Thyroid gland (tissue), 4 donors: ENCODE measurements at regions of chr1 and their contacts with region 1.

Region 1: DNA sequence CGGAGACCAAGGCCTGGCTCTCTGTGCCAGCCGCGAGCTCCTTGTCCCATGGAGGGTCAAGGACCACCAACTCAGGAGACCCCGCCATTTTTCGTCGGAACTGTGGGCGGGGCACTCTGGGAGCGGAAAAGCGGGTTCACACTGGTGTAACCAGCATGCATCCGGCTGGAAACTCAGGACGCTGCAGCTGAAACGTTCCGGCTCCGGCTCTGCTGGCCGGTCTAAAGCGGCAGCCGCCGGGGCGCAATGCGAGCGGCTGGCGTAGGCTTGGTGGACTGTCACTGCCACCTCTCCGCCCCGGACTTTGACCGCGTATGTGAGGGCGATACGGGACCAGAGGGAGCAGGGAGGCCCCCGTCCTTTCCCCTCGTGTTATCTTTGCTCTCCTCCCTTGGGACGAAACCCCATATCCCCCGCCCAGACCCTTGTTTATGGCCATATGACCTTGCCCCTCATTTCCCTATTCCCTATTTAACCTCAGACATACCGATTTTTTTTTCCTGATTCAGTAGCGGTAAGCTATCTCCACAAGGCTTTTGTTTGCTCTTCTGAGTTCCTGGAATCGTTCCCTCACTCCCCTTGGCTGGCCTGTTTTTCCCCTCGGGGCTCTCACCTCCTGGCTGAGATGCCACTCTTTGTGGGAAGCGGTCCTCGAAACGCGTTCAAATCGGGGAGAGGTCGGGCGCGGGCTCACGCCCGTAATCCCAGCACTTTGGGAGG is at the starts of genes NSL1 and TATDN3:
- DNase-seq: peak; percentile 83 to 85
- H3K4me3 ChIP-seq: peak within 1 kb of the TSS; percentile 67 to 81 (median 78)
- H3K27ac ChIP-seq: peak within 1 kb of the TSS; percentile 84 to 93 (median 86)
- H3K4me1 ChIP-seq: peaks cover 15 to 20% of the 10 kb centered on the region in 2 donors
- H3K27me3 ChIP-seq: no peaks in the 10 kb centered on the region
- CTCF ChIP-seq: no peak
- POLR2A ChIP-seq: peak in 1 of 2 donors; percentile 79
- total RNA-seq, gene NSL1: 47.5 to 62.8 (median 62.2) TPM
- total RNA-seq, gene TATDN3: 12.1 to 20.2 (median 18.6) TPM

Region 2: DNA sequence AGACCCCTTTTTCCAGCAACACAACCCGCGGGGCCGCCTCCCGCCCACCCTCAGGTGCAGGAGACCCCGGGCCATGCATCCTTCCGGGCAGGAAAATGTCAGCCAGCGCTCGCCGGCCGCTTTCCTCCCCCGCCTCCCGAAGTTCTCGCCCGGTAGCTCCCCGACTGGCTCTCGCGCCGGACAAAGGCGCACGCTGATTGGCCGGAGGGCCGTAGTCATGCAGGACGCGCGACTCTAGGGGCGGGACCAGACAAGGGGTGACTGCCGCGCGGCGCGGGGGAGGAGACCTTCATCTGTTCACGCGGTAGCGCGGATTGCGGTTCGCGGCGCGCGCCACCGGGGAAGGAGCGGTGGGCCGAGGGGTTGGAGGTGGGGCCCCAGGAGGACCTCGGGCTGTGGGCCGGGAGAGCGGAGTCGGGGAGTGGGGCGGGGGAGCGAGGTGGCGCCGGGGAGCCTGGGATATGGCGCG is 66.2 kb after region 1 on chr1 and contains the start of gene FLVCR1:
- intact Hi-C with region 1: loop called (anchors 10 kb)
- DNase-seq: peak; percentile 98 to 99
- H3K4me3 ChIP-seq: peak within 1 kb of the TSS; percentile 72 to 91 (median 87)
- H3K27ac ChIP-seq: peak within 1 kb of the TSS; percentile 61 to 87 (median 84)
- H3K4me1 ChIP-seq: peaks cover 5 to 19% of the 10 kb centered on the region in 2 donors
- H3K27me3 ChIP-seq: no peaks in the 10 kb centered on the region
- CTCF ChIP-seq: no peak
- POLR2A ChIP-seq: peak; percentile 30 to 91
- total RNA-seq, gene FLVCR1: 7.8 to 8.9 (median 8.2) TPM

Region 3: GRCh38 chr1:213015099-213016050 is 223.5 kb after region 1 on chr1 and contains the start of gene ANGEL2:
- intact Hi-C with region 1: loop called (anchors 10 kb)
- DNase-seq: peak; percentile 96 to 97
- H3K4me3 ChIP-seq: peak within 1 kb of the TSS; percentile 11 to 89 (median 53)
- H3K27ac ChIP-seq: peak within 1 kb of the TSS; percentile 78 to 87 (median 87)
- H3K4me1 ChIP-seq: peaks cover 12 to 18% of the 10 kb centered on the region in 2 donors
- H3K27me3 ChIP-seq: no peaks in the 10 kb centered on the region
- CTCF ChIP-seq: no peak
- POLR2A ChIP-seq: peak in 1 of 2 donors; percentile 68
- total RNA-seq, gene ANGEL2: 46.7 to 77.8 (median 65.7) TPM